Left ventricle myocardium superior (tissue), 1 donor: ENCODE measurements at regions of chr7 and their contacts with region 1.

Region 1: GRCh38 chr7:30800785-30801252 is 29.6 kb downstream of the MINDY4 start:
- DNase-seq: no peak
- ATAC-seq: peak; percentile 75

Region 2: GRCh38 chr7:30702200-30702599 is 98.6 kb before region 1 on chr7:
- intact Hi-C with region 1: no loop called
- DNase-seq: no peak
- ATAC-seq: no peak

Region 3: GRCh38 chr7:30740424-30741181 is 60.2 kb before region 1 on chr7:
- intact Hi-C with region 1: loop called (anchors 10 kb)
- DNase-seq: peak; percentile 86
- ATAC-seq: peak; percentile 76

Region 4: GRCh38 chr7:30941582-30942309 is 140.9 kb after region 1 on chr7:
- intact Hi-C with region 1: loop called (anchors 10 kb)
- DNase-seq: no peak
- ATAC-seq: no peak

Region 5: GRCh38 chr7:30974605-30975255 is 173.9 kb after region 1 on chr7:
- intact Hi-C with region 1: loop called (anchors 5 kb)
- DNase-seq: peak; percentile 60
- ATAC-seq: peak; percentile 84

Region 6: GRCh38 chr7:31122649-31123058 is 321.8 kb after region 1 on chr7:
- intact Hi-C with region 1: loop called (anchors 5 kb)
- DNase-seq: peak; percentile 54
- ATAC-seq: peak; percentile 82